Activated T-helper 1 cell treated with anti-CD3 and anti-CD28 coated beads, Interleukin-12 subunit alpha, Interleukin-12 subunit beta, Interleukin-2, Interleukin-4 antibody, amounts not matched to agents 30 ng/mL and 10 ng/mL and 1 ng/mL, durations not matched to agents 14 hours and 24 hours and 36 hours (primary cell): ENCODE measurements at regions of chr22 and their contacts with region 1.

Region 1: DNA sequence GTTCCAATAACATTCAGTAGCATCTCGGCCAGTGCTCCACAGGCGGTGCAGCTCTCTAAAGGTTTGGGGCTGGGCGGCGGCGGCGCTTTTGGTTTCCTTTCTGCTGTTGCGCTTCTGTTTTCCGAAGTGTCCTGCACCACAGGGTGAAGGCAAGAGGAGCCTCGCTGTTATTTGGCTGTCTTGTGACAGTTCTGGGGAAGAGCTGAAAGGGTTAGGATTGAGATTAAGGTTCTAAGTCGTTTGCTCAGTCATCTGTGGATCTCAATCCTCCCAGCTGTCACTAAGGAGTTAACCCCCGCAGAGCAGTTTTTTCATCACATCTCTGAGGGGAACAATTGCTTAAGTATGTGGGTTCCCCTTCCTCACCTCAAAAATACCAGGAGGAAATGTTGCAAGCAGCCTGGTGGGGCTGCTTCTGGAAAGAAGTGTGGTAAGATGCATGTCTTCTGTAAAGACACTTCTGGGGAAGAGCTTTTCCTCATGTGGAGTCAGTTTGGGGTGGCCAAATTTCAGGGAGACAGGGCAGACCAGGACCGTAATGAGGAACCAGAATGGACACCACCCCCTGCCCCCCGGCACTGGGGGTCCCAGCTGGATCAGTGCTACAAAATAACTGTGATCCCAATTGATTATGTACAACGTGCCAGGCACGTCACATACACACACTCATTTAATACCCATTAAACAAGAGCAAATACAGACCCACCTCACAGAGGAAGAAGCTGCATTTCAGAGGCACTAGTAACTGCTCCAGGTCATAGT is 14.2 kb downstream of the TMEM121B start:
- DNase-seq: peak; percentile 37
- H3K4me3 Mint-ChIP-seq: peak overlapping the region; percentile 65
- H3K27ac Mint-ChIP-seq: peak overlapping the region; percentile 78
- H3K4me1 Mint-ChIP-seq: peaks cover 57% of the 10 kb centered on the region
- H3K27me3 Mint-ChIP-seq: no peaks in the 10 kb centered on the region

Region 2: GRCh38 chr22:17120281-17120680 is 13.3 kb after region 1 on chr22:
- intact Hi-C with region 1: loop called (anchors 1 kb)
- DNase-seq: peak; percentile 42
- H3K4me3 Mint-ChIP-seq: no peak overlapping the region
- H3K27ac Mint-ChIP-seq: no peak overlapping the region
- H3K4me1 Mint-ChIP-seq: peaks cover 39% of the 10 kb centered on the region
- H3K27me3 Mint-ChIP-seq: peaks cover 25% of the 10 kb centered on the region

Region 3: DNA sequence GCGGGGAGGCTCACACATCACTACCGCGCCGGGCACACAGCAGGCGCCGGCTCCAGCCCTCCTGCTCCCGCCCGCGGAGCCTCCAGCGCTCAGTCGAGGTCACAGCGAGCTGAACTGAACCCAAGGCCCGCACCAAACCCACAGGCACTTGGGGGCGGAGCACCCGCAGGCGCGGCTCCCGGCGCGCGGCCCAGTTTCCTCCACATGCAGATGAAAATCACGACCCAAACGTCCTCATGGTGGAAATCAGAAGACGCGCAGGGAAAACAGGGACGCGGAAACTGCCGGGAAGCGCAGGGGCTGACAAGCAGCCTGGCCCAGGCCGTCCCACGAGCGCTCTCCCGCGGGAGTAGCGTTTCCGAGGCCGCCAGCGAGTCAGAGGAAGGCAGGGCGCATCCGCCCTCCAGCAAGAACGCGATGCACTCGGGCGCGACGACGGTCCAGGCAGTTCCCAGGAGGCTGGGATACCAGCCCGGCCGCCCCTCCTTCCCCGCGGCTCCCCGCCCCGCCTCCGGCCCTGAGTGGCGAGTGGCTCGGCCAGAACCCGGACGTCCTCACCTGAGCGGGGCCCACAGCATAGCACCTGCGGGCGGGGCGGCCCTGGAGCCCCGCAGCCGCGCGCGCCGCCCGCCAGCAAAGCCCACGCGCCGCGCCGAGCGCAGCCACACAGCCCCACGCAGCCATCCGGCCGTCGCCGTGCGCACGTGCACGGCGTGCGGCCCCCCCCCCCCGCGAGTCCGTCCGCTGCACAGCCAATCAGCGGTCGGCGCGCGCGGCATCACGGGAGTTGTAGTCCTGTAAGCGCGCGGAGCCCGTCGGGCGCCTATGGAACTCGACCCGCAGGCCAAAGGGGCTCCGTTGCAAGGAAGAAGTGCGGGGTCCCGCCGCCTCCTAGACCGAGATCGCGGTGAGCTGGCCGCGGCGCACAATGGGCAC is 51.9 kb after region 1 on chr22 and contains the start of gene HDHD5:
- intact Hi-C with region 1: no loop called
- DNase-seq: peak; percentile 78
- H3K4me3 Mint-ChIP-seq: peak within 1 kb of the TSS; percentile 88
- H3K27ac Mint-ChIP-seq: peak within 1 kb of the TSS; percentile 75
- H3K4me1 Mint-ChIP-seq: peaks cover 25% of the 10 kb centered on the region
- H3K27me3 Mint-ChIP-seq: no peaks in the 10 kb centered on the region
- total RNA-seq, gene HDHD5: 39.1 and 42.1 TPM in 2 replicates

Region 4: GRCh38 chr22:17243524-17243923 is 136.6 kb after region 1 on chr22:
- intact Hi-C with region 1: no loop called
- DNase-seq: peak; percentile 34
- H3K4me3 Mint-ChIP-seq: no peak overlapping the region
- H3K27ac Mint-ChIP-seq: peak overlapping the region; percentile 73
- H3K4me1 Mint-ChIP-seq: peaks cover 27% of the 10 kb centered on the region
- H3K27me3 Mint-ChIP-seq: no peaks in the 10 kb centered on the region